Activated CD4-positive, alpha-beta memory T cell treated with anti-CD3 and anti-CD28 coated beads for 36 hours (primary cell): ENCODE measurements at regions of chr10 and their contacts with region 1.

Region 1: GRCh38 chr10:103367782-103368518 is at the start of gene TAF5:
- DNase-seq: peak; percentile 95
- H3K4me3 Mint-ChIP-seq: peak within 1 kb of the TSS; percentile 83
- H3K27ac Mint-ChIP-seq: peak within 1 kb of the TSS; percentile 86
- H3K4me1 Mint-ChIP-seq: peaks cover 11% of the 10 kb centered on the region
- H3K27me3 Mint-ChIP-seq: no peaks in the 10 kb centered on the region
- total RNA-seq, gene TAF5: 12.9 to 13.2 TPM

Region 2: GRCh38 chr10:102743588-102744373 is 624.2 kb before region 1 on chr10 and contains the start of gene WBP1L:
- CTCF ChIA-PET with region 1: no interaction called
- POLR2A ChIA-PET with region 1: no interaction called
- intact Hi-C with region 1: loop called (anchors 10 kb)
- DNase-seq: peak; percentile 97
- H3K4me3 Mint-ChIP-seq: peak within 1 kb of the TSS; percentile 98
- H3K27ac Mint-ChIP-seq: peak within 1 kb of the TSS; percentile 67
- H3K4me1 Mint-ChIP-seq: peaks cover 41% of the 10 kb centered on the region
- H3K27me3 Mint-ChIP-seq: no peaks in the 10 kb centered on the region
- total RNA-seq, gene WBP1L: 14.6 to 15.9 TPM

Region 3: DNA sequence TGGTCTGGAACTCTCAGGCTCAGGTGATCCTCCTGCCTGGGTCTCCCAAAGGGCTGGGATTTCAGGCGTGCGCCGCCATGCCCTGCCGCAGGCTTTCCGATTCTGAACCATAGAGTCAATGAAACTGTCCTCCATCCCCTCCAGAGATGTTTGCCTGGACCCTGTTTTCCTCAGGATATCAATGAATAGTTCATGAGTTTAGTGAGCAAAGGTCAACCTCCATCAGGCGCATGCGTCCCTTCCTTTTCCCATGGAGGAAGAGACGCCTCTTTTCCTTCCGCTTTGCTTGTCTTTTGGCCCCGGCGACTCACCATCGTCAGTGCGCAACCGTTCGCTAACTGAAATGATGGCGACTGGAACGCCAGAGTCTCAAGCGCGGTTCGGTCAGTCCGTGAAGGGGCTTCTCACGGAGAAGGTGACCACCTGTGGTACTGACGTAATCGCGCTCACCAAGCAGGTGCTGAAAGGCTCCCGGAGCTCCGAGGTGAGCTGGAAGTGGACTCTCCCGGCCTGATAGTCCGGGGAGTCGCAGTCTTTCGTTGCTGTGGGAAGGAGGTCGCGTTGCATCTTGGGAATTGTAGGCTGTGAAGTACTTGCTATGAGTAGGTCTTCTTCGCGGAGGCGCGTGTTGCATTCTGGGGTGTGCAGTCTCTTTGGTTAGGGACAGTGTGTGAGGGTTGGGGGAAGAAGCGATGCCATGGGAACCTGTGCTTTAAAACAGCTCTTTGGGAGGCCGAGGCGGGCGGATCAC is 513.8 kb before region 1 on chr10 and contains the start of gene BORCS7:
- CTCF ChIA-PET with region 1: no interaction called
- POLR2A ChIA-PET with region 1: no interaction called
- intact Hi-C with region 1: loop called (anchors 1 kb)
- DNase-seq: peak; percentile 93
- H3K4me3 Mint-ChIP-seq: peak within 1 kb of the TSS; percentile 96
- H3K27ac Mint-ChIP-seq: peak within 1 kb of the TSS; percentile 94
- H3K4me1 Mint-ChIP-seq: peaks cover 14% of the 10 kb centered on the region
- H3K27me3 Mint-ChIP-seq: no peaks in the 10 kb centered on the region
- total RNA-seq, gene BORCS7: 5.0 to 5.9 TPM

Region 4: DNA sequence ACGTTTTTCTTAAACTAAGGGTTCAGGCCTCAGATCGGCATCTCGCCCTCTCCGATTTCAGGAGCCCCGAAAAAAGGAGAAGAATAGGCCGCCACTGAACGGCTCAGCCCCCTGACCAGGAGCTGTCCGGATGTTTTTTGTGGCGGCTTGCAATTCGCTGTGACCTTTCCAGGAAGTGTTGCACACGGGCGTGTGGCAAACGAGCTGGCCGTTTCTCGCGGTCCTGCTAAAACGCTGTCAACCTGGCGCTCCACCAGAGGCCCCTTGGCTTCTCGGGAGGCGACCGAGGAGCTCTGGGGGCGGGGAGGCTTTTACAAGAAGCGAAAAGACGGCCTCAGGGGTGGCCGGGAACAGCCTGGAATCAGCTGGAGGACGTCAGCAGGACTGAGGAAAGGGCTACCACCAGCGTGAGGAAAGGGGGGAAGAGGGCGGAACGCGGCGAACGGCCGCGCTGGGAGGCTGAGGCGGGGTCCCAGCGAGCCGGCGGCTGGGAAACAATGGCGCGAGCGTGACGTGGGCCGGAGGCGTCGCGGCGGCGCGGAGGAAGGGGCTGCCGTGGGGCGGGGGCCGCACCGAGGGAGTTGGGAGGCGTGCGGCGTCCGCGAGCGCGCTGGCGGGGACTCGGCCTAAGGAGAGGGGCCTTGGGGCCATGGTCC is 175.4 kb before region 1 on chr10:
- CTCF ChIA-PET with region 1: interaction called, 3 read pairs
- POLR2A ChIA-PET with region 1: no interaction called
- intact Hi-C with region 1: loop called (anchors 1 kb)
- DNase-seq: peak; percentile 81
- H3K4me3 Mint-ChIP-seq: peak overlapping the region; percentile 92
- H3K27ac Mint-ChIP-seq: peak overlapping the region; percentile 92
- H3K4me1 Mint-ChIP-seq: peaks cover 43% of the 10 kb centered on the region
- H3K27me3 Mint-ChIP-seq: no peaks in the 10 kb centered on the region

Region 5: DNA sequence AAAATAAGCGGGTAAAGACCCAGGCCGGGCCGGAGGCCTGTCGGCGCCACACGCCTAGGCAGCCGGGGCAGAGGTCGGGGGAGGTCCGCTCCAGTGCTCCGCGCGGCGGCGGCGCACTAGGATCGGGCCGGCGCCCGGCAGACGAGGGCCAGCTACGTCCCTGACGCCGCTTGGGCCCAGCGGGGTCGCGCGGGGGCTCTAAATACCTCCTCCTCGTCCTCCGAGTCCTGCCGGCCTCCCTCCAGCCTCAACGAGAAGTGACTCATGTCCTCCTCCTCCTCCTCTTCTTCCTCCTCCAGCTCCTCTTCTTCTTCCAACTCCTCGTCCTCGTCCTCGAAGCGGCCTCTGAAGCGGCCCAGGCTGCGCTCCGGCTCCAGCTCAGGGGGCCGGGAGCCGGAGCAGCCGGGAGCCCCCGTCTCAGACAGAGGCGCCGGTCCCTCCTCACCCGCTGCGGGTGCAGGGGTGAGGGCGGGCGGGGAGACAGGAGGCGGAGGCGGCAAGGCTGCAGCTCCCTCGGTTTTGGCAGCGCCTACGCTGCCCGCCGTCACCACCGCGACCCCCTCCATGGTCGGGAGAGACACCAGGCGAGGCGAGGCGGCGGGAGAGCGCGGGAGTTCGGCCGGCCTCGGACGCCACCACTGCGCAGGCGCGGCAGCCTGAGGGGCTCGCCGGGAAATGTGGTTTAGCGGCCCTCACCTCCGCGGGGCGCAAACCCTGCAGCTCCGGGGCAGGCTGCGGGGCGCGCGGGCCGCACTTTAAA is 17.3 kb before region 1 on chr10 and contains the start of gene PCGF6:
- CTCF ChIA-PET with region 1: no interaction called
- POLR2A ChIA-PET with region 1: interaction called, 17 read pairs
- intact Hi-C with region 1: loop called (anchors 1 kb)
- DNase-seq: peak; percentile 81
- H3K4me3 Mint-ChIP-seq: peak within 1 kb of the TSS; percentile 89
- H3K27ac Mint-ChIP-seq: peak within 1 kb of the TSS; percentile 84
- H3K4me1 Mint-ChIP-seq: peaks cover 7% of the 10 kb centered on the region
- H3K27me3 Mint-ChIP-seq: no peaks in the 10 kb centered on the region
- total RNA-seq, gene PCGF6: 12.4 to 13.4 TPM

Region 6: DNA sequence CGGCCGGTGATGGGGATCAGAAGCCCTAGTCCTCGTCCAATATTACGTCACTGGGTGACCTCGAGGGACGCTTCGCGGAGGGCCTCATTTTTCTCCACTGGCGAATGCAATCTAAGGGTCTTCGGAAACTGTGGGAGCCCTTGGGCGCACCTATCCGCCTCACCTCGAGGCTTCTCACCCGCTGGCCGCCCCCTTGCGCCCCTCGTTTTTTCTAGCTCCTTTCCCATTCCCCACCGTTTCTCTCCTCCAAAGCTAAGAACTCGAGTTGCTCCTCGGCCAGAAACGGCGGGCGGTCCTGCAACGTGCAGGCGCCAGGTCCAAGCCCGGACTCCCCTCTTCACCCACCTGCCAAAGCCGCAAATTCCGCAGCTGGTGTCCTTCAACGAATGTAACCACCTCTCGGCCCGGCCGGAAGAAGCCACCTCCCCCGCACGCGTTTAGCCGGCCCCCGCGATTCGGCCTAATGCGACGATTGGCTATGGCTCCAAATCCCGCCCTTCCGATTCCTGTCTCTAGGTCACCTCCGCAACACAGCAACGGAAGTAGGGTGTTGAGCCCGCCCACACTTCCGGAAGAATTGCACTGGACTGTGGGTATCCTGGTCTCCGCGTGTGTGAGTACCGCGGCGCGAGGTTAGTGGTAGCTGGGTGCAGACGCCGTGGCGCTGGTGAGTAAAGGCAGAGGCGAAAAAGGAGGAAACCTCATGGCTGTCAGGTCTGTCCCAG is 28.3 kb after region 1 on chr10 and contains the starts of genes ATP5MK and PDCD11:
- CTCF ChIA-PET with region 1: interaction called, 3 read pairs
- POLR2A ChIA-PET with region 1: interaction called, 12 read pairs
- intact Hi-C with region 1: loop called (anchors 1 kb)
- DNase-seq: peak; percentile 98
- H3K4me3 Mint-ChIP-seq: peak within 1 kb of the TSS; percentile 95
- H3K27ac Mint-ChIP-seq: peak within 1 kb of the TSS; percentile 88
- H3K4me1 Mint-ChIP-seq: peaks cover 59% of the 10 kb centered on the region
- H3K27me3 Mint-ChIP-seq: no peaks in the 10 kb centered on the region
- total RNA-seq, gene ATP5MK: 436 to 438 TPM
- total RNA-seq, gene PDCD11: 56.4 to 56.7 TPM

Region 7: GRCh38 chr10:103666087-103666761 is 298.3 kb after region 1 on chr10:
- CTCF ChIA-PET with region 1: no interaction called
- POLR2A ChIA-PET with region 1: no interaction called
- intact Hi-C with region 1: no loop called
- DNase-seq: peak; percentile 25
- H3K4me3 Mint-ChIP-seq: no peak overlapping the region
- H3K27ac Mint-ChIP-seq: no peak overlapping the region
- H3K4me1 Mint-ChIP-seq: peaks cover 12% of the 10 kb centered on the region
- H3K27me3 Mint-ChIP-seq: no peaks in the 10 kb centered on the region